PC-9 (cell line): ENCODE measurements at regions of chr7 and their contacts with region 1.

Region 1: DNA sequence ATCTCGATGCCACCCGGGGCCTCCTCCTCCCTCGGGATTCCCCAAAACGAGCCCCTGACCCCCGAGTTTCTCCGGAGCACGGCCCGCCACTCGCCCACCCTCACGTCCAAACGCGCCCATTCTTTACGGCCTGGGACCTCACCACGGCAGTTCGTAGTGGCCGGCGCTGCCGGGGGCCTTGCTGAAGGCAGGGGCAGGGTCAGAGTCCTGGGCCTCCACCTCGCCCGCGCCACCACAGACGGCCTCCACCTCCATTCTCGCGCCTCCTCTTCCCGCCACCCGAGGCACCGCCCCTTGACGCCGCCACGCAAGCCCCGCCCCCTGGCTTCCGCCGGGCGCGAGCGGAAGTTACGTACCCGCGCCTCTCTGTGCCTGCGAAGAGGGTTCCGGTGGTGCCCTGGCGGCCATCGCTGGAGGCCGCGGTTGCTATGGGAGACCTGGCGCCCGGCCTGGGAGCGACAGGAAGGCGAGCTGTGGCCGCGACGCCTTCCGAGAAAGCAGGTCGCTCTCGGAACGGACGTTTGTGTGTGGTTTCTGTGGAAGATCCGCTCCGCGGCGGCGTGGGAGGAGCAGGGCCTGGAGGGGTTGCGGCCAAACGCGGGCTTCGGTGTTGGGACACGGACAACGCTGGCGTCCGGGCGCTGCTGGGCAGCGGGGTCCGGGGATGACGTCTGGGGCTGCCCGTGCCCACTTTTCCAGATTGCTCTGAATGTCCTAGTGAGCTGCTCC is at the start of gene RFC2:
- DNase-seq: peak; percentile 88 to 99
- H3K4me3 ChIP-seq: peak within 1 kb of the TSS; percentile 92
- H3K27ac ChIP-seq: peak within 1 kb of the TSS; percentile 67
- H3K4me1 ChIP-seq: peaks cover 17% of the 10 kb centered on the region
- H3K27me3 ChIP-seq: no peaks in the 10 kb centered on the region
- CTCF ChIP-seq: no peak
- total RNA-seq, gene RFC2: 65.5 and 75.7 TPM in 2 replicates

Region 2: DNA sequence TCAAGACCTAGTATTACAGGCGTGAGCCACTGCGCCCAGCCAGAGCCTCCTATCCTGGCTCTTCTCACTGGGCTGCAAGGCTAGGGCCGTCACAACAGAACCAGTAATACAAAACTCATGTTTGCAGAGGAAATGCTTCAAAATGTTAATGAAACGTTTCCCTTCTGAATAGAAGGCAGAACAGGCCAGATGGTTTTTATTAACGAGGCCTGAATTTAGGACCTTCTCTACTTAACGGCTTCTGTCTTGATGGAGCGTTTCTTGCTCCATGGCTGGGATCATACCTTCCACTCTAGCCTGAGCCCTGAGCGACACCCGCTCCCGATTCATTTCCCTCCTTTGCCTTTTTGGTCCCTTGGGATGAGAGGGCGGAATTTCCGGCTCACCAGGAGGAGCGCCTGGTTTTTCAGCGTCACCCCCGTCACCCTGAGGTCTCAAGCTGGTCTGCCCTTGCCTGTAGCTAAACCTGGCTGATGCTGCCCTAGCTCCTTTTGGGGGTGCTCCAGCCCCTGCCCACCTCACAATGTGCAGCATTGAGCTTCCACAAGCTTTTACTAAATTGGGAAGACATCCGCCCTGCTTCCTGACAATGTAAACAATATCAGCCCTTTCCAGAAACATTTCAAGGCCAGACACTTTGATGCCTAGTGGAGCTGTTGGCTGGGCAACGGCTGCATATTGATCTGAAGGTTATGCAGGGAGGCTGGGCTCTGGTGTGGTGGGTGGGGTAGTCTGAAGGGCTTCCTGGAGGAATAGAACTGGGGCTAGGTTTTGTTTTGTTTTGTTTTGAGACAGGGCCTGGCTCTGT is 40.1 kb after region 1 on chr7:
- CTCF ChIA-PET with region 1: no interaction called
- POLR2A ChIA-PET with region 1: interaction called, 30 read pairs
- intact Hi-C with region 1: loop called (anchors 5 kb)
- DNase-seq: no peak
- H3K4me3 ChIP-seq: no peak overlapping the region
- H3K27ac ChIP-seq: no peak overlapping the region
- H3K4me1 ChIP-seq: peaks cover 8% of the 10 kb centered on the region
- H3K27me3 ChIP-seq: no peaks in the 10 kb centered on the region
- CTCF ChIP-seq: no peak